ENCODE measurements at regions of chr6 and their contacts with region 1.

Region 1: DNA sequence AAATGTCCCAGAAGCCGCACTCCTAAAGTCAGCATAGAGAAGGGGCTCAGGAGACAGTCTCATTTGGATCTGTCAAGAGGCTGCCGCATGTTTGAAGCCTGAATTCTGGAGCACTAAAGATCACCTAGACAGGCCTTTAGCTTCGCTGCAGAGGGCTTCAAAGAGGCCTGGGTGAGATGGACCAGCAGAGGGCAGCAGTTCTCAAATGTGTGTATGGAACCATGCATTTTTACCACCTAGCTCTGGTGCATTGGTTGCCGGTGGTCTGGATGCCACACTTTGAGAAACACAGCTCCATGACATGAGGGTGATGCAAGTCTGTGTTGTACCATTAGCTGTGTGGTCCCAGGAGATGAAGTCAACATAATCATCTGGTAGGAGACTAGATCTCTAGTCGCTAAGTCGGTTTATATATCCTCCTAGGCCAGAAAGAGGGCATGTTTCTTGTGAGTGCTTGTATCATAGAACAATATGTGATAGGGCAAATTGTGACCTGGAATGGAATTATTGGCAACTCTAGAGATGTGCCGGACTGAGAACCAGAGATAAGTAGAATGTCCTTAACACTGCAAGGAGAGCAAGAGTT is 64.8 kb downstream of the KIAA0319 start:
- DNase-seq: peak; percentile 44 to 73 (median 65)
- ATAC-seq: peak; percentile 92
- H3K4me3 ChIP-seq: no peak overlapping the region
- H3K4me3 Mint-ChIP-seq: no peak overlapping the region
- H3K27ac ChIP-seq: no peak overlapping the region
- H3K27ac Mint-ChIP-seq: peak overlapping the region in 2 of 9 donors; percentile 1 to 31
- H3K4me1 ChIP-seq: peaks cover 0 to 5% of the 10 kb centered on the region in 2 donors
- H3K4me1 Mint-ChIP-seq: peaks cover 3 to 13% (median 5%) of the 10 kb centered on the region in 7 donors
- H3K27me3 ChIP-seq: no peaks in the 10 kb centered on the region
- H3K27me3 Mint-ChIP-seq: peaks cover 0 to 31% (median 0%) of the 10 kb centered on the region in 5 donors

Region 2: GRCh38 chr6:24283043-24283985 is 297.9 kb before region 1 on chr6:
- CTCF ChIA-PET with region 1: no interaction called
- POLR2A ChIA-PET with region 1: no interaction called
- intact Hi-C with region 1: loop called in 1 of 2 experiments (anchors 1 kb)
- DNase-seq: peak in 6 of 9 donors; percentile 13 to 50 (median 42)
- ATAC-seq: peak; percentile 81
- H3K4me3 ChIP-seq: no peak overlapping the region
- H3K4me3 Mint-ChIP-seq: peak overlapping the region; percentile 21 to 77 (median 50)
- H3K27ac ChIP-seq: no peak overlapping the region
- H3K27ac Mint-ChIP-seq: no peak overlapping the region
- H3K4me1 ChIP-seq: no peaks in the 10 kb centered on the region
- H3K4me1 Mint-ChIP-seq: peaks cover 0 to 7% (median 6%) of the 10 kb centered on the region in 7 donors
- H3K27me3 ChIP-seq: no peaks in the 10 kb centered on the region
- H3K27me3 Mint-ChIP-seq: peaks cover 4 to 14% (median 9%) of the 10 kb centered on the region in 5 donors

Region 3: GRCh38 chr6:24520929-24521546 is 60.1 kb before region 1 on chr6:
- CTCF ChIA-PET with region 1: interaction called, 3 read pairs
- POLR2A ChIA-PET with region 1: no interaction called
- intact Hi-C with region 1: loop called (anchors 2 kb)
- DNase-seq: peak in 3 of 9 donors; percentile 10 to 26 (median 11)
- ATAC-seq: peak; percentile 75
- H3K4me3 ChIP-seq: no peak overlapping the region
- H3K4me3 Mint-ChIP-seq: no peak overlapping the region
- H3K27ac ChIP-seq: no peak overlapping the region
- H3K27ac Mint-ChIP-seq: peak overlapping the region in 1 of 9 donors; percentile 5
- H3K4me1 ChIP-seq: no peaks in the 10 kb centered on the region
- H3K4me1 Mint-ChIP-seq: peaks cover 0 to 20% (median 4%) of the 10 kb centered on the region in 7 donors
- H3K27me3 ChIP-seq: no peaks in the 10 kb centered on the region
- H3K27me3 Mint-ChIP-seq: no peaks in the 10 kb centered on the region

Region 4: DNA sequence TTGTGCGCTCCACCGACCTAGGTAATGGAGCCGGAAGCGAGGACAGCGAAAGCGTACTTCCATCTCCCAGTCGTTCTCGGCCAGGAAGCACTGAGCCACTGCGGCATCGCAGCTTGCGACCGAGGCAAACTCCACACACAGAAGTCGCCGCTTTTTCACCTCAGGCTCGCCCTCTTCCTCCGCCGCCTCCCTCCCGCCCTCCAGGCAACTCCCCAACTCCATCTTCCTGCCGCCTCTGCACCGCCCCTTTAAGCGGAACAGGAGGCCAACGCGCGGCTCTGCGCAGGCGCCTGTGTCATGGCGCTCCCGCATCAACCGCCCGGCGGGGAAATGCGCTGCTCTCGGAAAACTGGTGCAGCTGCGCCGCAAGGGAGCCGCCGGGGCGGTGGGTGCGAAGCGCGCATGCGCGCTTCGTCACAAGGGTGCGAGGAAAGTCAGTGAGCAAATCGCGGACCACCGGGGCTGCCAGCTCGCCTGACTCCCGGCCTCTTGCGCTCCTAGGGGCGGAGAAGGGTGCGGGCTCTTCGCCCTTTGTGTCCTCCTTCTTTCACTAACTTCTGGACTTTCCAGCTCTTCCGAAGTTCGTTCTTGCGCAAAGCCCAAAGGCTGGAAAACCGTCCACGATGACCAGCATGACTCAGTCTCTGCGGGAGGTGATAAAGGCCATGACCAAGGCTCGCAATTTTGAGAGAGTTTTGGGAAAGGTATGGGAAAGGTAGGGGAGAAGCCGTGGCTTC is 85.6 kb after region 1 on chr6 and contains the starts of genes ACOT13 and TDP2:
- CTCF ChIA-PET with region 1: interaction called, 14 read pairs
- POLR2A ChIA-PET with region 1: interaction called, 3 read pairs
- intact Hi-C with region 1: loop called in 1 of 2 experiments (anchors 1 kb)
- DNase-seq: peak; percentile 93 to 97 (median 96)
- ATAC-seq: peak; percentile 97
- H3K4me3 ChIP-seq: peak within 1 kb of the TSS; percentile 91
- H3K4me3 Mint-ChIP-seq: peak within 1 kb of the TSS; percentile 93 to 100 (median 98)
- H3K27ac ChIP-seq: peak within 1 kb of the TSS; percentile 88
- H3K27ac Mint-ChIP-seq: peak within 1 kb of the TSS; percentile 91 to 99 (median 98)
- H3K4me1 ChIP-seq: peaks cover 19 to 27% of the 10 kb centered on the region in 2 donors
- H3K4me1 Mint-ChIP-seq: peaks cover 28 to 70% (median 68%) of the 10 kb centered on the region in 7 donors
- H3K27me3 ChIP-seq: no peaks in the 10 kb centered on the region
- H3K27me3 Mint-ChIP-seq: no peaks in the 10 kb centered on the region
- total RNA-seq, gene ACOT13: 4.0 to 20.0 (median 12.5) TPM
- total RNA-seq, gene TDP2: 38.6 to 69.7 (median 48.2) TPM

Region 5: GRCh38 chr6:24766680-24767462 is 185.7 kb after region 1 on chr6:
- CTCF ChIA-PET with region 1: interaction called, 32 read pairs
- POLR2A ChIA-PET with region 1: no interaction called
- intact Hi-C with region 1: loop called (anchors 1 kb)
- DNase-seq: peak in 6 of 9 donors; percentile 9 to 48 (median 41)
- ATAC-seq: peak; percentile 74
- H3K4me3 ChIP-seq: no peak overlapping the region
- H3K4me3 Mint-ChIP-seq: no peak overlapping the region
- H3K27ac ChIP-seq: no peak overlapping the region
- H3K27ac Mint-ChIP-seq: no peak overlapping the region
- H3K4me1 ChIP-seq: no peaks in the 10 kb centered on the region
- H3K4me1 Mint-ChIP-seq: peaks cover 0 to 8% (median 3%) of the 10 kb centered on the region in 7 donors
- H3K27me3 ChIP-seq: no peaks in the 10 kb centered on the region
- H3K27me3 Mint-ChIP-seq: no peaks in the 10 kb centered on the region

Region 6: GRCh38 chr6:25017932-25018567 is 436.9 kb after region 1 on chr6:
- CTCF ChIA-PET with region 1: interaction called, 12 read pairs
- POLR2A ChIA-PET with region 1: interaction called, 3 read pairs
- intact Hi-C with region 1: loop called (anchors 1 to 2 kb)
- DNase-seq: peak; percentile 52 to 86 (median 81)
- ATAC-seq: peak; percentile 88
- H3K4me3 ChIP-seq: no peak overlapping the region
- H3K4me3 Mint-ChIP-seq: peak overlapping the region in 9 of 10 donors; percentile 35 to 79 (median 67)
- H3K27ac ChIP-seq: peak overlapping the region; percentile 61
- H3K27ac Mint-ChIP-seq: peak overlapping the region; percentile 40 to 98 (median 94)
- H3K4me1 ChIP-seq: peaks cover 9 to 34% of the 10 kb centered on the region in 2 donors
- H3K4me1 Mint-ChIP-seq: peaks cover 25 to 48% (median 39%) of the 10 kb centered on the region in 7 donors
- H3K27me3 ChIP-seq: no peaks in the 10 kb centered on the region
- H3K27me3 Mint-ChIP-seq: no peaks in the 10 kb centered on the region

Measured in naive thymus-derived CD4-positive, alpha-beta T cell (primary cell).